ENCODE measurements at regions of chr7 and their contacts with region 1.

Region 1: DNA sequence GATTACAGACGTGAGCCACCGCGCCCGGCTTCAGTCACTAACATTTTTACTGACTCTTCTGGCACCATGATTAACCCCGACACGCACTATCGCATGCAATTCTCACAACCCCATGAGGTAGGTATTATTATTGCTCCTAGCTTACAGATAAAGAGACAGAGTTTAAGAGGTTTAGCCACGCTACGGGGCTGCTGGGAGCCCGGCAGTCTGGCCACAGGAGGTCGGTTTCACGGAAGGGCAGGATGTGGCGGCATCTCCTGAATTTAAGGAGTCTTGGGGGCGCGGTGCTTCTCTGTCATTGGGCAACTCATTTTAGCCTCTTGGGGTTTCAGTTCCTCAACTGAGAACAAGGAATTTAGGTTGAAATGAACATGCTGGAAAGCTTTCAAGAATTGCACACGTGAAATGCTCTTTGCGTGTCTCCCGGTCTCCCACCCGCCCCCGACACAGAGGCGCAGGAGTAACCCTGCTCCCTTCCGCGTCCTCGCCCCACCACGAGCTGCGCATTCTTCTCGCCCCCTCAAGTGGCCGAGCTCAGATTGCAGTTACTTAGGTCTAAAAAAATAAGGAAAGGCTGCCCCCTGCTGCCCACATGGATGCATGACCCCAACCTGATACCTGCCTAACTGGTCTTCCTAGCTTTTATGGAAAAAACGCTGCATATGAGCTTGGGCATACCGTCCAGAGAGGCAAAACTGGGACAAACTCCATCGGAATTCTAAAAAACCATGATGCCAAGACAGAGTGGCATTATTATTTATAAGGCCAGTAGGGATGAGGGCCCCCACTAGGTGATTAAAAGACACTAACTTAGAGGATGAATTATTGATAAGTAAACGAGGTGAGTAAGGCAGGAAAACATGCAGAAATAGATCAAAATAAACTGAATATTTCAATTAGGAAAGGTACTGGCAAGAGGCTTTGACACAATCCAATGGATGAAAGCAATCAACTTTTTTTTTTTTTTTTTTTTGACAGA is 12.4 kb downstream of the PRSS2 start:
- DNase-seq: peak; percentile 81 to 96 (median 90)

Region 2: DNA sequence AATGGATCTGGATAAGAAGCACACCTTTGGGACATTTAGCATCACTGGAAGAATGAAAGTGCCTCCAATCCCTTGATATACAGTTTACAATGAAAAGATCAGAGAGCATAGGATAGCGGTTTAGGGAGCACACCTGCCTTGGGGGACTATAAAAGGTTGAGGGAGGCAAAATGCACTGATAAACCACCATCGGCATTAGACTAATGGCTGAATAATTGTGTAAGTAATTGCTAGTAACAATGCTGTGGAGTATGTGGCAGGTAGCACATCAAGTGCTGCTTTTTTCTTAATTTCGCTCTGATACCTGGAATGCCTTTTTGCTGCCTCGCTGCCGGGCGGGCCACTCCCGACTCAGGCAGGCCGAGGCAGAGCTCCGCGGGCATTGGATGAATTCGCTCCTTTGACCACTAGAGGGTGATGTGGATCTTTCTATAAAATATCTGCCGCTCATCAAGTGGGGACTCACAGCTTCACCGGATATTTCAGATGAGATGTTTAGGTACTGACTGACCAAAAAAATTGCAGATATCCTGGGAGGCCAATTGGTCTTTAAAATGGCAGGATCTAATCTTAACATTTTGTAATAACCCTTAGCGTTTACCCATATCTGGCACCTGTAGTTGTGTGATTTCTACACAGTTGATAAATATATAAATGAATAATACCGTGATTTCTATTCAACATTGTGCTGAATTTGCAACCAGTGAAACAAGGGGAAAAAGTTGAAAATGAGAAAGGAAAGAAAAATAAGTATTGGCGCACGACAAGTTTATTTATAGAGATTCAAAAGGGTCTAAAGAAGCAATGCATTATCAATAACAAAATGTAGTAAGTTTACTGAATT is 150.7 kb before region 1 on chr7:
- intact Hi-C with region 1: loop called (anchors 2 kb)
- DNase-seq: peak; percentile 36 to 85 (median 66)

Measured in head of caudate nucleus (tissue), 42 donors.